AG04450 (cell line): ENCODE measurements at regions of chr1 and their contacts with region 1.

Region 1: DNA sequence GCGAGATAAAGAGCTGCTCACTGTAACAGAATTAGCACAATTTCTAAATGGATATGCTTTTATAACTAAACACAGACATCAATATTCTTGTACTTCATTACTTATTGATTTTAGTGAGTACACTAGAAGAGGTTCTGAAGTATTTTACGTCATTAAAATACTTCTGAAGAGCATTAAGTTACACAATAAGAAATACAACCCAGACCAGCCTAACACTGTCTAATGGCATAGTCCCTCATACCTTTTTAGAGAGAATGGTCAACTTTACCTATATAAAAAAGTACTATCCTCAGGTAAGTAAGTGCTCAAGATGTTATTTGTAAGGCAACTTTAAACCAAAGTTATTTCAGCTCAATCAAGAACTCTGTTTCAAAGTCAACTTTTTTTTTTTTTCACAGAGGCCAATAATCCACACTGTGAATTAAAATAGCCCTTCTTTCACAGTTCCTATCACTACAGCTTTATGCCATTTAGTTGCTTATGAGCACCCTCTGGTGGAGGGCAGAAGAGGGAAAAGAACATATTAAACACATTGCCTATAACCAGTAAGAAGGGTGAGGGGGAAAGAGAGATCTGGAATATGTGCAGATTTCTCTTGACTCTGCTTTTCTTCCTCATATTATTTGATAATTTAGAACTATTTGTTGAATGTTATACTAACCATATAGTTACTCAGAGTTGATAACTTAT is 182.1 kb upstream of the DMRTA2 start:
- DNase-seq: no peak
- H3K4me3 ChIP-seq: no peak overlapping the region
- H3K27ac ChIP-seq: no peak overlapping the region
- H3K27me3 ChIP-seq: no peaks in the 10 kb centered on the region
- CTCF ChIP-seq: peak; percentile 65

Region 2: GRCh38 chr1:50368179-50369012 is 236.9 kb before region 1 on chr1:
- CTCF ChIA-PET with region 1: interaction called, 34 read pairs
- POLR2A ChIA-PET with region 1: no interaction called
- DNase-seq: no peak
- H3K4me3 ChIP-seq: no peak overlapping the region
- H3K27ac ChIP-seq: no peak overlapping the region
- H3K27me3 ChIP-seq: peaks cover 10% of the 10 kb centered on the region
- CTCF ChIP-seq: peak; percentile 74

Region 3: DNA sequence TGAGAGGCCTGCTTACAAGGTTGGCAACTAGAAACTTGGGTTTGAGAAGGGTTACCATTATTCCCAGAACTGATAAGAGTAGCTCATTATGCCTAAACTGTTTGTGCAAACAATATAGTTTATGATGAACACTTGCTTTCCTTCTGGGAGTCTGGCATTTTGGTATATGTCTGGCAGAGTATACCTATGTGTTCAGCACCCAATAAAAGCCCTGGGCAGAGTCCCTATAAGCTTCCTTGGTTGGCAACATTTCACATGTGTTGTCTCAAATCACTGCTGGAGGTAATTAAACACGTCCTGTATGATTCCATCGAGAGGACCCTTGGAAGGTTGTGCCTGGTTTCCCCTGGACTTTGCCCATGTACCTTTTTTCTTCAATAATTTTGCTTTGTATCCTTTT is 142.4 kb before region 1 on chr1:
- CTCF ChIA-PET with region 1: no interaction called
- POLR2A ChIA-PET with region 1: no interaction called
- DNase-seq: no peak
- H3K4me3 ChIP-seq: no peak overlapping the region
- H3K27ac ChIP-seq: no peak overlapping the region
- H3K27me3 ChIP-seq: no peaks in the 10 kb centered on the region
- CTCF ChIP-seq: no peak

Region 4: GRCh38 chr1:50666849-50667248 is 61.5 kb after region 1 on chr1:
- CTCF ChIA-PET with region 1: no interaction called
- POLR2A ChIA-PET with region 1: no interaction called
- DNase-seq: no peak
- H3K4me3 ChIP-seq: no peak overlapping the region
- H3K27ac ChIP-seq: no peak overlapping the region
- H3K27me3 ChIP-seq: no peaks in the 10 kb centered on the region
- CTCF ChIP-seq: no peak

Region 5: DNA sequence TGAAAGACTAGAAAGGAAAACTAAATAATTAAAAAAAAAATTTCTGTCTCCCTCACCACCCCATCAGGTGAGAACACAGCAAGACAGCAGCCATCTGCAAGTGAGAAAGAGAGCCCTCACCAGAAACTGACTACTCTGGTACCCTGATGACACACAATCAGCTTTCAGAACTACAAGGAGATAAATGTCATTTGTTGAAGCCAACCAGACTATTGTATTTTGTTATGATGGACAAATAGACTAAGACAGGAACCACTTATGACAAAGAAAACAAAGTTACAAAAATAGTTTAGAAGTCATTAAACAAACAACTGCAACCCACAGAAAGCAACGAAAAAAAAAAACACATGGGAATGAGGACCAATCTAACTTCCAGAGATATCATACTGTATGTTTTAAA is 256.4 kb after region 1 on chr1:
- CTCF ChIA-PET with region 1: no interaction called
- POLR2A ChIA-PET with region 1: no interaction called
- DNase-seq: no peak
- H3K4me3 ChIP-seq: no peak overlapping the region
- H3K27ac ChIP-seq: no peak overlapping the region
- H3K27me3 ChIP-seq: no peaks in the 10 kb centered on the region
- CTCF ChIP-seq: no peak